ENCODE measurements at regions of chr3 and their contacts with region 1.

Region 1: DNA sequence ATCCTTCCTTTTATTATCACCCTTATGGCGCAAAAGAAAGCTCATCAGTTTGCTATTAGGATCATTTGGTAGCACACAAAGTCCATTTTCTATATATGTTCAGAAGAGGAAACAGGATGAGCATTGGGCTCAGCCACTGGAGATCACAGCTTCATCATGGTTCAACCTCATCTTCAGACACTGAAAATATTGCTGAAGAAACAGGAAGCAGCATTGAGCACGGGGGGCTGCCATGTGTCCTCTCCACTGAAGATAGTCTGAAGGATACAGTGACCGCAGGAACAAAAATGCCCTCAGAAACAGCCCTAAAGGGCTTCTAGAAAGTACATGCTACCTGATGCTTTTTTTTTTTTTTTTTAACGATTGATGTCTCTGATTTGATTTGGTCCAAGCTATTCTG is 835.3 kb upstream of the CFAP20DC start:
- DNase-seq: no peak
- ATAC-seq: no peak
- H3K4me3 ChIP-seq: no peak overlapping the region
- H3K4me3 Mint-ChIP-seq: peak overlapping the region in 6 of 10 donors; percentile 9 to 80 (median 56)
- H3K27ac ChIP-seq: peak overlapping the region; percentile 23
- H3K27ac Mint-ChIP-seq: peak overlapping the region in 8 of 9 donors; percentile 83 to 97 (median 89)
- H3K4me1 ChIP-seq: peaks cover 4 to 69% of the 10 kb centered on the region in 2 donors
- H3K4me1 Mint-ChIP-seq: peaks cover 25 to 98% (median 95%) of the 10 kb centered on the region in 7 donors
- H3K27me3 ChIP-seq: no peaks in the 10 kb centered on the region
- H3K27me3 Mint-ChIP-seq: no peaks in the 10 kb centered on the region

Region 2: GRCh38 chr3:59367150-59367549 is 518.0 kb before region 1 on chr3:
- CTCF ChIA-PET with region 1: no interaction called
- POLR2A ChIA-PET with region 1: no interaction called
- intact Hi-C with region 1: no loop called
- DNase-seq: no peak
- ATAC-seq: no peak
- H3K4me3 ChIP-seq: no peak overlapping the region
- H3K4me3 Mint-ChIP-seq: no peak overlapping the region
- H3K27ac ChIP-seq: no peak overlapping the region
- H3K27ac Mint-ChIP-seq: no peak overlapping the region
- H3K4me1 ChIP-seq: no peaks in the 10 kb centered on the region
- H3K4me1 Mint-ChIP-seq: peaks cover 9 to 28% (median 14%) of the 10 kb centered on the region in 7 donors
- H3K27me3 ChIP-seq: no peaks in the 10 kb centered on the region
- H3K27me3 Mint-ChIP-seq: no peaks in the 10 kb centered on the region

Region 3: GRCh38 chr3:59818033-59818920 is 66.8 kb before region 1 on chr3:
- CTCF ChIA-PET with region 1: no interaction called
- POLR2A ChIA-PET with region 1: no interaction called
- intact Hi-C with region 1: no loop called
- DNase-seq: no peak
- ATAC-seq: peak; percentile 45
- H3K4me3 ChIP-seq: no peak overlapping the region
- H3K4me3 Mint-ChIP-seq: no peak overlapping the region
- H3K27ac ChIP-seq: no peak overlapping the region
- H3K27ac Mint-ChIP-seq: peak overlapping the region in 7 of 9 donors; percentile 22 to 63 (median 35)
- H3K4me1 ChIP-seq: no peaks in the 10 kb centered on the region
- H3K4me1 Mint-ChIP-seq: peaks cover 7 to 93% (median 52%) of the 10 kb centered on the region in 7 donors
- H3K27me3 ChIP-seq: no peaks in the 10 kb centered on the region
- H3K27me3 Mint-ChIP-seq: no peaks in the 10 kb centered on the region

Region 4: GRCh38 chr3:59873576-59874230 is 11.4 kb before region 1 on chr3:
- CTCF ChIA-PET with region 1: no interaction called
- POLR2A ChIA-PET with region 1: interaction called, 3 read pairs
- intact Hi-C with region 1: loop called in 1 of 2 experiments (anchors 2 kb)
- DNase-seq: no peak
- ATAC-seq: no peak
- H3K4me3 ChIP-seq: no peak overlapping the region
- H3K4me3 Mint-ChIP-seq: peak overlapping the region in 5 of 10 donors; percentile 1 to 75 (median 26)
- H3K27ac ChIP-seq: no peak overlapping the region
- H3K27ac Mint-ChIP-seq: peak overlapping the region in 6 of 9 donors; percentile 29 to 90 (median 56)
- H3K4me1 ChIP-seq: peaks cover 0 to 42% of the 10 kb centered on the region in 2 donors
- H3K4me1 Mint-ChIP-seq: peaks cover 27 to 92% (median 86%) of the 10 kb centered on the region in 7 donors
- H3K27me3 ChIP-seq: no peaks in the 10 kb centered on the region
- H3K27me3 Mint-ChIP-seq: no peaks in the 10 kb centered on the region

Region 5: DNA sequence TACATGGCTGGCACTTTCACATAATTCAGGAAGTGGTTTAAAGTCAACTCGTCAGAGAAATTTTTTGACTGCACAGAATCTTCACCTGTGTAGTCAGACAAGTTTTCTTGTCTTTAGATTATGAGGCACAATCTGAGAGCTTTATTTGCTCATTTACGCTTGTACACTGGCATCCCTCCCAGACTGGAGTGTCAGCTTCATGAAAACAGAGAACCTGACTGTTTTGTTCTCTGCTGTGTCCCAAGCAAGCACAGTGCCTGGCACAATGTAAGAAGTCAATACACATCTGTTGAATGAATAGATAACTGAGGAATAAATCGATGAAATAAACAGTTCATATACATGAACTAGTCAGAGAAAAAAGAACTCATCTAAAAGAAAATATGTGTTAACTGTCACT is 10.9 kb after region 1 on chr3:
- CTCF ChIA-PET with region 1: no interaction called
- POLR2A ChIA-PET with region 1: no interaction called
- intact Hi-C with region 1: loop called in 1 of 2 experiments (anchors 1 kb)
- DNase-seq: peak in 3 of 9 donors; percentile 11 to 33 (median 28)
- ATAC-seq: no peak
- H3K4me3 ChIP-seq: no peak overlapping the region
- H3K4me3 Mint-ChIP-seq: peak overlapping the region in 6 of 10 donors; percentile 3 to 66 (median 25)
- H3K27ac ChIP-seq: no peak overlapping the region
- H3K27ac Mint-ChIP-seq: peak overlapping the region in 8 of 9 donors; percentile 35 to 80 (median 68)
- H3K4me1 ChIP-seq: peaks cover 0 to 34% of the 10 kb centered on the region in 2 donors
- H3K4me1 Mint-ChIP-seq: peaks cover 17 to 91% (median 83%) of the 10 kb centered on the region in 7 donors
- H3K27me3 ChIP-seq: no peaks in the 10 kb centered on the region
- H3K27me3 Mint-ChIP-seq: no peaks in the 10 kb centered on the region

Region 6: GRCh38 chr3:60101621-60102020 is 216.5 kb after region 1 on chr3:
- CTCF ChIA-PET with region 1: no interaction called
- POLR2A ChIA-PET with region 1: no interaction called
- intact Hi-C with region 1: no loop called
- DNase-seq: no peak
- ATAC-seq: no peak
- H3K4me3 ChIP-seq: no peak overlapping the region
- H3K4me3 Mint-ChIP-seq: peak overlapping the region in 1 of 10 donors; percentile 11
- H3K27ac ChIP-seq: no peak overlapping the region
- H3K27ac Mint-ChIP-seq: no peak overlapping the region
- H3K4me1 ChIP-seq: peaks cover 0 to 16% of the 10 kb centered on the region in 2 donors
- H3K4me1 Mint-ChIP-seq: peaks cover 11 to 52% (median 40%) of the 10 kb centered on the region in 7 donors
- H3K27me3 ChIP-seq: no peaks in the 10 kb centered on the region
- H3K27me3 Mint-ChIP-seq: no peaks in the 10 kb centered on the region

Region 7: DNA sequence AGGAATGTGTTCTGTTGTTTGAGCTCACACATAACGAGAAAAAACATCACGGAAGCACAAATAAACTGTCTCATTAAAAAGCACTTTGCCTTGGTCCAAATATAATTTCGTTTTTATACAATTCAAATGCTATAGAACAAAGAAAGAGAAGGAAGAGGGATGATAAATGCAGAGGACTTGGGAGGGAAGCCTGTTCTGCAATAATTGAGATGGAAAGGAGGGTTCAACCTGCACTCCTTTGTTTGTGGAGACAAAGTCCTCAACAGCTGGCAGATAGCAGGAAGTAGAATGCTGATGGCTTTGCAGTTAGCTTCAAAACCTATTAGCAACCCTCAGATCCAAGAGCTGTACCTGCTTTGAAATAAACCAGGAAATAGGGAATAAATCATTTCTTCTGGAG is 355.4 kb after region 1 on chr3:
- CTCF ChIA-PET with region 1: no interaction called
- POLR2A ChIA-PET with region 1: no interaction called
- intact Hi-C with region 1: no loop called
- DNase-seq: no peak
- ATAC-seq: no peak
- H3K4me3 ChIP-seq: no peak overlapping the region
- H3K4me3 Mint-ChIP-seq: no peak overlapping the region
- H3K27ac ChIP-seq: no peak overlapping the region
- H3K27ac Mint-ChIP-seq: no peak overlapping the region
- H3K4me1 ChIP-seq: no peaks in the 10 kb centered on the region
- H3K4me1 Mint-ChIP-seq: peaks cover 0 to 29% (median 21%) of the 10 kb centered on the region in 7 donors
- H3K27me3 ChIP-seq: no peaks in the 10 kb centered on the region
- H3K27me3 Mint-ChIP-seq: no peaks in the 10 kb centered on the region

Region 8: GRCh38 chr3:61251174-61251972 is 1366.3 kb after region 1 on chr3 and contains the start of gene FHIT:
- CTCF ChIA-PET with region 1: no interaction called
- POLR2A ChIA-PET with region 1: no interaction called
- intact Hi-C with region 1: loop called in 1 of 2 experiments (anchors 10 kb)
- DNase-seq: peak; percentile 73 to 89 (median 87)
- ATAC-seq: peak; percentile 96
- H3K4me3 ChIP-seq: peak within 1 kb of the TSS; percentile 83
- H3K4me3 Mint-ChIP-seq: peak within 1 kb of the TSS; percentile 83 to 94 (median 92)
- H3K27ac ChIP-seq: peak within 1 kb of the TSS; percentile 80
- H3K27ac Mint-ChIP-seq: peak within 1 kb of the TSS; percentile 74 to 95 (median 84)
- H3K4me1 ChIP-seq: peaks cover 11 to 13% of the 10 kb centered on the region in 2 donors
- H3K4me1 Mint-ChIP-seq: peaks cover 10 to 27% (median 25%) of the 10 kb centered on the region in 7 donors
- H3K27me3 ChIP-seq: no peaks in the 10 kb centered on the region
- H3K27me3 Mint-ChIP-seq: peaks cover 0 to 12% (median 1%) of the 10 kb centered on the region in 5 donors
- total RNA-seq, gene FHIT: 53.4 to 230 (median 191) TPM